Activated CD4-positive, alpha-beta memory T cell treated with anti-CD3 and anti-CD28 coated beads for 36 hours (primary cell): ENCODE measurements at regions of chr7 and their contacts with region 1.

Region 1: GRCh38 chr7:55534175-55534915 is 38.0 kb downstream of the VOPP1 start:
- DNase-seq: peak; percentile 90
- H3K4me3 Mint-ChIP-seq: peak overlapping the region; percentile 66
- H3K27ac Mint-ChIP-seq: peak overlapping the region; percentile 97
- H3K4me1 Mint-ChIP-seq: peaks cover 97% of the 10 kb centered on the region
- H3K27me3 Mint-ChIP-seq: no peaks in the 10 kb centered on the region

Region 2: GRCh38 chr7:55309040-55309991 is 225.0 kb before region 1 on chr7:
- CTCF ChIA-PET with region 1: interaction called, 20 read pairs
- POLR2A ChIA-PET with region 1: interaction called, 54 read pairs
- intact Hi-C with region 1: loop called (anchors 1 kb)
- DNase-seq: peak; percentile 95
- H3K4me3 Mint-ChIP-seq: peak overlapping the region; percentile 16
- H3K27ac Mint-ChIP-seq: peak overlapping the region; percentile 90
- H3K4me1 Mint-ChIP-seq: peaks cover 43% of the 10 kb centered on the region
- H3K27me3 Mint-ChIP-seq: peaks cover 25% of the 10 kb centered on the region

Region 3: DNA sequence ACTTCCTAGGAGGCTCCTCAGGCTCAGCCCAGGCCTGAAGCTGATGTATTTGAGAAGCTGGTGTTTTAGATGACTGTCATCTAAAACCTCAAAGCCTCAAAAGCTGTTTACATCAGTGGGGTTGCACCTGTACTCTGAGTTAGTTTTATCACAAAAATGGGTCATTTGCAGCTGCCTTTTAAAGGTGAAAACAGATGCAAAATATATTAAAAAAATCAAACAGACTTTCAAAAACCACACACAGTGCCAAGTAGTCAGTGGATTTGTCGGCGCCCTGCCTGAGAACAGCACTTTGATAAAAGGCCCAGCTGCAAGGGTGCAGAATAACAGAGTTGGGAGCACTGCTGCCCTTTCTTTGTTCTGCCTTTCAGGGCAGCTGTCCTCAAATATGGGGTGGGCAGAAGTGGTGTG is 65.1 kb before region 1 on chr7:
- CTCF ChIA-PET with region 1: interaction called, 3 read pairs
- POLR2A ChIA-PET with region 1: no interaction called
- intact Hi-C with region 1: loop called (anchors 1 kb)
- DNase-seq: peak; percentile 42
- H3K4me3 Mint-ChIP-seq: peak overlapping the region; percentile 5
- H3K27ac Mint-ChIP-seq: peak overlapping the region; percentile 85
- H3K4me1 Mint-ChIP-seq: peaks cover 75% of the 10 kb centered on the region
- H3K27me3 Mint-ChIP-seq: no peaks in the 10 kb centered on the region

Region 4: GRCh38 chr7:55515569-55516279 is 18.6 kb before region 1 on chr7:
- CTCF ChIA-PET with region 1: interaction called, 14 read pairs
- POLR2A ChIA-PET with region 1: interaction called, 65 read pairs
- intact Hi-C with region 1: loop called (anchors 1 kb)
- DNase-seq: peak; percentile 53
- H3K4me3 Mint-ChIP-seq: peak overlapping the region; percentile 18
- H3K27ac Mint-ChIP-seq: peak overlapping the region; percentile 74
- H3K4me1 Mint-ChIP-seq: peaks cover 82% of the 10 kb centered on the region
- H3K27me3 Mint-ChIP-seq: no peaks in the 10 kb centered on the region

Region 5: GRCh38 chr7:55546829-55547228 is 12.5 kb after region 1 on chr7:
- CTCF ChIA-PET with region 1: interaction called, 4 read pairs
- POLR2A ChIA-PET with region 1: interaction called, 25 read pairs
- intact Hi-C with region 1: loop called (anchors 1 kb)
- DNase-seq: peak; percentile 76
- H3K4me3 Mint-ChIP-seq: no peak overlapping the region
- H3K27ac Mint-ChIP-seq: peak overlapping the region; percentile 42
- H3K4me1 Mint-ChIP-seq: peaks cover 75% of the 10 kb centered on the region
- H3K27me3 Mint-ChIP-seq: no peaks in the 10 kb centered on the region

Region 6: DNA sequence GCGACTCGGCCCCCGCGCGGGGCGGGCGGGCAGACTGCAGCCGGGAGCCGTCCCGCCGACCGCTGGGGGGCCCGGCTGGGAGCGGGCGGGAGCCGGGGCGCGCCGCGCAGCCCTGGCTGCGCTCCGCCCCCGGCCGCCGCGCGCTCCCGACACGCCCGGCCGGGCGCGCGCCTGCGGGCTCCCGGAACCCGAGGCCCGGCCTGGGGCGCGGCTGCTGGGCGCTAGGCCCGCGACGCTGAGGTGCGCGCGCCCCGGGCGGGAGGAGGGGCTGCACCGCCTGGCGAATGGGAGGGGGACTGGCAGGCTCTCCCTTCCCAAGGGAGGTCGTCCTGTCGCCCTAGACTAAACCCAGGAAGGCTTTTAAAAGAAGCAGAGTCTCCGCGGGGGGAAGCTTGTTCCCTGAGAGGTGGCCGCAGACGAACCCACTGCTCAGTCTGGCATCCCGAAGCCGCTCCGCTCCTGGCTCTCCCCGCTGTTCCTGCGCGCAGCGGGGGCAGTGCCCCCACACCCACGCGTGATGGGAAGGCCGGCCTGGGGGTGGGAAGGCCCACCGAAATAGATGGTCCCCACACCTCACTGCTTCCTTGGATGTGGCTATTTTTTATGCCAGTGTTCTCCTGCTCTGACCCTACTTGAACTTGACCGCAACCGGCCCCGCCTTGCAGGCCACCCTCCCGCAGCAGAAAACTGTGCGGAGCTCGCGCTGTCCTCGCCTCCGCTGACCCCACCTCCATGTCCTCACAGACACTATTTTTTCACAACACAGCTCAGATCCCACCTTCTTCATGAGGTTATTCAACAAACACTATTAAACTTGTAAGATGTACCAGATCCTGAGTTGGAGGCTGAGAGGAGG is 38.3 kb after region 1 on chr7 and contains the start of gene VOPP1:
- CTCF ChIA-PET with region 1: interaction called, 16 read pairs
- POLR2A ChIA-PET with region 1: interaction called, 128 read pairs
- intact Hi-C with region 1: loop called (anchors 1 kb)
- DNase-seq: peak; percentile 66
- H3K4me3 Mint-ChIP-seq: peak within 1 kb of the TSS; percentile 89
- H3K27ac Mint-ChIP-seq: peak within 1 kb of the TSS; percentile 93
- H3K4me1 Mint-ChIP-seq: peaks cover 67% of the 10 kb centered on the region
- H3K27me3 Mint-ChIP-seq: no peaks in the 10 kb centered on the region
- total RNA-seq, gene VOPP1: 64.9 to 67.2 TPM